ENCODE measurements at regions of chr1 and their contacts with region 1.

Region 1: GRCh38 chr1:158203693-158204457 is 23.2 kb downstream of the CD1D start:
- DNase-seq: peak in 2 of 9 experiments; percentile 57 to 71
- ATAC-seq: peak; percentile 64
- H3K4me3 ChIP-seq: no peak overlapping the region
- H3K4me3 Mint-ChIP-seq: no peak overlapping the region
- H3K27ac ChIP-seq: no peak overlapping the region
- H3K27ac Mint-ChIP-seq: no peak overlapping the region
- H3K4me1 ChIP-seq: peaks cover 4% of the 10 kb centered on the region
- H3K4me1 Mint-ChIP-seq: peaks cover 12% of the 10 kb centered on the region
- H3K27me3 ChIP-seq: no peaks in the 10 kb centered on the region
- H3K27me3 Mint-ChIP-seq: peaks cover 8% of the 10 kb centered on the region
- CTCF ChIP-seq: peak; percentile 97

Region 2: GRCh38 chr1:158329733-158330132 is 125.9 kb after region 1 on chr1:
- CTCF ChIA-PET with region 1: interaction called, 14 read pairs
- POLR2A ChIA-PET with region 1: no interaction called
- intact Hi-C with region 1: loop called in 1 of 2 experiments (anchors 5 kb)
- DNase-seq: peak in 2 of 9 experiments; percentile 20 to 38
- ATAC-seq: no peak
- H3K4me3 ChIP-seq: no peak overlapping the region
- H3K4me3 Mint-ChIP-seq: no peak overlapping the region
- H3K27ac ChIP-seq: no peak overlapping the region
- H3K27ac Mint-ChIP-seq: no peak overlapping the region
- H3K4me1 ChIP-seq: no peaks in the 10 kb centered on the region
- H3K4me1 Mint-ChIP-seq: peaks cover 12% of the 10 kb centered on the region
- H3K27me3 ChIP-seq: no peaks in the 10 kb centered on the region
- H3K27me3 Mint-ChIP-seq: peaks cover 10% of the 10 kb centered on the region
- CTCF ChIP-seq: no peak

Region 3: DNA sequence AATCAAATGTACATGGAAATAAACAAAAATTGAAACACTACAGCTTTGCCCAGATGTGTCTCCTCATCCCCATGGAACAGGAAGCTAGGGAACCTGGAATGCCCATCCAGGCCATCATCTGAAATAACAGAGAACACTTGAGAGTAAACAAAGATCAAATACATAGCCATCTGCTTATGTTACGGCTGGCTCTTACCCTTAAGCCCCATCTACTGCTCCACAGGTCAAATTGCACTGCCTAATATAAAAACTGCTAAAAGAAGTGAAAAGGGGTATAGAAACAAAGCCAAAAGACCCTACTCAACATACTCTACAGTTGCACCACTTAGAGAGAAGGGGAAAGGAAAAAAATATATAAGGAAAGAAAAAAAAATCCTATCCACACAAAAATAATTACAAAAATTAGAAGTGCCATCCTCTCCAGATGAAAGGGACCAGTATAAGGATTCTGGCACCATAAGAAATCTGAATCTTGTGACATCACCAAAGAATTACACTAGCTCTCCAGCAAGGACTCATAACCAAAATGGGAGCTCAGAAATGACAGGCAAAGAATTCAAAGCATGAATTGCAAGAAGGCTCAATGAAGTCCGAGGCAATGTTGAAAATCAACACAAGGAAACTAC is 323.4 kb after region 1 on chr1:
- CTCF ChIA-PET with region 1: interaction called, 4 read pairs
- POLR2A ChIA-PET with region 1: no interaction called
- intact Hi-C with region 1: loop called in 1 of 2 experiments (anchors 5 kb)
- DNase-seq: peak in 2 of 9 experiments; percentile 29 to 66
- ATAC-seq: no peak
- H3K4me3 ChIP-seq: no peak overlapping the region
- H3K4me3 Mint-ChIP-seq: no peak overlapping the region
- H3K27ac ChIP-seq: no peak overlapping the region
- H3K27ac Mint-ChIP-seq: no peak overlapping the region
- H3K4me1 ChIP-seq: no peaks in the 10 kb centered on the region
- H3K4me1 Mint-ChIP-seq: no peaks in the 10 kb centered on the region
- H3K27me3 ChIP-seq: peaks cover 0 to 3% of the 10 kb centered on the region in 2 experiments
- H3K27me3 Mint-ChIP-seq: peaks cover 14% of the 10 kb centered on the region
- CTCF ChIP-seq: peak; percentile 58

Region 4: GRCh38 chr1:158611916-158612315 is 408.0 kb after region 1 on chr1:
- CTCF ChIA-PET with region 1: no interaction called
- POLR2A ChIA-PET with region 1: no interaction called
- intact Hi-C with region 1: no loop called
- DNase-seq: no peak
- ATAC-seq: no peak
- H3K4me3 ChIP-seq: no peak overlapping the region
- H3K4me3 Mint-ChIP-seq: no peak overlapping the region
- H3K27ac ChIP-seq: no peak overlapping the region
- H3K27ac Mint-ChIP-seq: no peak overlapping the region
- H3K4me1 ChIP-seq: no peaks in the 10 kb centered on the region
- H3K4me1 Mint-ChIP-seq: no peaks in the 10 kb centered on the region
- H3K27me3 ChIP-seq: no peaks in the 10 kb centered on the region
- H3K27me3 Mint-ChIP-seq: peaks cover under 1% of the 10 kb centered on the region
- CTCF ChIP-seq: no peak

Region 5: DNA sequence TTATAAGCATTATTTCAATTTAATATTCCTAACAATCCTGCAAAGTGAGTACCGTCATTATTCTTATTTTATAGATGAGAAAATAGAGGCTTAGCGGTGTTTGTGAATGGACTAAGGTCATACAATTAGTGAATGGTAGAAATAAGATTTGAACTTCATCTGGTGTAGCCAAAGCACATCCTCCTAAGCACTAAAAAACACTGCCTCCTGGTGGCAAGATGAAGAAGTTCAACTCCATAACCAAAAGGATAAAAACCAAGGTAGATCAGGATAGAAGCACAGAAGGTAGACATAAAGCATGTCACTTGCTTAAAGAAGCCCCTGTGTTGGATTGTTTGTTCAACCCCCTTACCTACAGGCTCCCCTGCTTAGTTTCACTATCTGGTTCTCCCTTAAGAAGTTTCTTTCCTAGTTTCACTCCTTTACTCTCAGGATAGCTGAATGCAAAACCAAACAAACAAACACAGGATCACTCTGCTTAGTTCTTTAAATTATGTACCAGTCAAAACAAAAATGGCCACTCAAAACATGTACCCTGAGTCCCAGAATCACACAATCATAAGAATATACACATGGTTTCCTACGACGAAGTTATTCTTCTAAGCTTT is 885.4 kb after region 1 on chr1:
- CTCF ChIA-PET with region 1: interaction called, 9 read pairs
- POLR2A ChIA-PET with region 1: no interaction called
- intact Hi-C with region 1: loop called in 1 of 2 experiments (anchors 5 kb)
- DNase-seq: peak in 3 of 9 experiments; percentile 15 to 66 (median 57)
- ATAC-seq: peak; percentile 54
- H3K4me3 ChIP-seq: no peak overlapping the region
- H3K4me3 Mint-ChIP-seq: no peak overlapping the region
- H3K27ac ChIP-seq: no peak overlapping the region
- H3K27ac Mint-ChIP-seq: no peak overlapping the region
- H3K4me1 ChIP-seq: no peaks in the 10 kb centered on the region
- H3K4me1 Mint-ChIP-seq: peaks cover 3% of the 10 kb centered on the region
- H3K27me3 ChIP-seq: no peaks in the 10 kb centered on the region
- H3K27me3 Mint-ChIP-seq: no peaks in the 10 kb centered on the region
- CTCF ChIP-seq: peak; percentile 74